ENCODE measurements at regions of chr6 and their contacts with region 1.

Region 1: GRCh38 chr6:42547407-42548329 is 16.2 kb upstream of the UBR2 start:
- DNase-seq: peak; percentile 94
- ATAC-seq: peak; percentile 99
- H3K4me3 Mint-ChIP-seq: peak overlapping the region; percentile 56
- H3K27ac Mint-ChIP-seq: peak overlapping the region; percentile 63
- H3K4me1 Mint-ChIP-seq: peaks cover 15% of the 10 kb centered on the region
- H3K27me3 Mint-ChIP-seq: peaks cover 10% of the 10 kb centered on the region

Region 2: GRCh38 chr6:41984623-41985022 is 563.0 kb before region 1 on chr6:
- CTCF ChIA-PET with region 1: no interaction called
- POLR2A ChIA-PET with region 1: no interaction called
- intact Hi-C with region 1: no loop called
- DNase-seq: no peak
- ATAC-seq: peak; percentile 43
- H3K4me3 Mint-ChIP-seq: no peak overlapping the region
- H3K27ac Mint-ChIP-seq: peak overlapping the region; percentile 44
- H3K4me1 Mint-ChIP-seq: peaks cover 69% of the 10 kb centered on the region
- H3K27me3 Mint-ChIP-seq: no peaks in the 10 kb centered on the region

Region 3: GRCh38 chr6:42224222-42224989 is 323.3 kb before region 1 on chr6:
- CTCF ChIA-PET with region 1: interaction called, 17 read pairs
- POLR2A ChIA-PET with region 1: no interaction called
- intact Hi-C with region 1: loop called (anchors 2 kb)
- DNase-seq: no peak
- ATAC-seq: peak; percentile 98
- H3K4me3 Mint-ChIP-seq: peak overlapping the region; percentile 47
- H3K27ac Mint-ChIP-seq: peak overlapping the region; percentile 73
- H3K4me1 Mint-ChIP-seq: peaks cover 26% of the 10 kb centered on the region
- H3K27me3 Mint-ChIP-seq: no peaks in the 10 kb centered on the region

Region 4: GRCh38 chr6:42302411-42302810 is 245.3 kb before region 1 on chr6:
- CTCF ChIA-PET with region 1: interaction called, 14 read pairs
- POLR2A ChIA-PET with region 1: no interaction called
- intact Hi-C with region 1: loop called in 1 of 2 experiments (anchors 5 kb)
- DNase-seq: no peak
- ATAC-seq: no peak
- H3K4me3 Mint-ChIP-seq: no peak overlapping the region
- H3K27ac Mint-ChIP-seq: no peak overlapping the region
- H3K4me1 Mint-ChIP-seq: peaks cover 4% of the 10 kb centered on the region
- H3K27me3 Mint-ChIP-seq: no peaks in the 10 kb centered on the region

Region 5: GRCh38 chr6:42423244-42423643 is 124.4 kb before region 1 on chr6:
- CTCF ChIA-PET with region 1: interaction called, 12 read pairs
- POLR2A ChIA-PET with region 1: no interaction called
- intact Hi-C with region 1: no loop called
- DNase-seq: peak; percentile 69
- ATAC-seq: peak; percentile 75
- H3K4me3 Mint-ChIP-seq: peak overlapping the region; percentile 1
- H3K27ac Mint-ChIP-seq: peak overlapping the region; percentile 20
- H3K4me1 Mint-ChIP-seq: peaks cover 63% of the 10 kb centered on the region
- H3K27me3 Mint-ChIP-seq: no peaks in the 10 kb centered on the region

Region 6: DNA sequence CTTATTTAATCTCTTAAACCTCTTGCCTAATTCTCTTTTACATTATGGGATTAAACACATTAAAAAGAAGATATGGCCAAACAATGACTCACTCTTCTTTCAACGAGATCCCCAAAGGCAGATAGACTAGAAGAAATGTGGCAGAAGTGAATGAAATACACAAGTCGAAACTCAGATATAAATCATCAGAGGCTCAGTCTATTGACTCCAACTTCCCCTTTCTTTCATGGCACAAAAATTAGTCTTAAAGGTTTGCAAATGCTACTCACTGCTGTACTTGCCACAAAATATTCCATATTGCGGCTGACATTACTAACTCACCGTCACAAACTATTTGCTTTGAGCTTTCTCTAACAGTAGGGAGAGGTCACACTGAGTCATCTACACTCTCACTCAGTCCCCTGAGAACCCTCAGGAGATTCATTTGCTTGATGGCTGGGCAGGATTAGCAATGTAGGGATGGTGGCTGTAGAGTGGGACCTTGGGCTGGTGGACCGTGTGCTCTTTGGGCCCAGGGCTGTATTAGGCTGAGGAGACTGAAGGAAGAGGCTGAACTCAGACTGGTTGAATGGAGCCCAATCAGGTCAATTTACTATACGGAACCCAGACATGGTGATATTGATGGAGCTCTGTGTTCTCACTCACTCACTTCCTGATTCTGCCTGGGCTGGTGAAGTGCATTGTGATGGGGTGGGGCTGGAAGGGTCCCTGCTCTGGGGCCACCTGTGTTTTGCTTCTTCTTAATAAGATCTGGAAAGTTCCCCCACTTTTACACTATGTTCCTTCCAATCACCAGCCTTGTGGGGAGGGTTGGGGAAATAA is 26.7 kb before region 1 on chr6:
- CTCF ChIA-PET with region 1: interaction called, 25 read pairs
- POLR2A ChIA-PET with region 1: no interaction called
- intact Hi-C with region 1: no loop called
- DNase-seq: peak; percentile 49
- ATAC-seq: peak; percentile 97
- H3K4me3 Mint-ChIP-seq: no peak overlapping the region
- H3K27ac Mint-ChIP-seq: peak overlapping the region; percentile 76
- H3K4me1 Mint-ChIP-seq: peaks cover 24% of the 10 kb centered on the region
- H3K27me3 Mint-ChIP-seq: no peaks in the 10 kb centered on the region

Region 7: DNA sequence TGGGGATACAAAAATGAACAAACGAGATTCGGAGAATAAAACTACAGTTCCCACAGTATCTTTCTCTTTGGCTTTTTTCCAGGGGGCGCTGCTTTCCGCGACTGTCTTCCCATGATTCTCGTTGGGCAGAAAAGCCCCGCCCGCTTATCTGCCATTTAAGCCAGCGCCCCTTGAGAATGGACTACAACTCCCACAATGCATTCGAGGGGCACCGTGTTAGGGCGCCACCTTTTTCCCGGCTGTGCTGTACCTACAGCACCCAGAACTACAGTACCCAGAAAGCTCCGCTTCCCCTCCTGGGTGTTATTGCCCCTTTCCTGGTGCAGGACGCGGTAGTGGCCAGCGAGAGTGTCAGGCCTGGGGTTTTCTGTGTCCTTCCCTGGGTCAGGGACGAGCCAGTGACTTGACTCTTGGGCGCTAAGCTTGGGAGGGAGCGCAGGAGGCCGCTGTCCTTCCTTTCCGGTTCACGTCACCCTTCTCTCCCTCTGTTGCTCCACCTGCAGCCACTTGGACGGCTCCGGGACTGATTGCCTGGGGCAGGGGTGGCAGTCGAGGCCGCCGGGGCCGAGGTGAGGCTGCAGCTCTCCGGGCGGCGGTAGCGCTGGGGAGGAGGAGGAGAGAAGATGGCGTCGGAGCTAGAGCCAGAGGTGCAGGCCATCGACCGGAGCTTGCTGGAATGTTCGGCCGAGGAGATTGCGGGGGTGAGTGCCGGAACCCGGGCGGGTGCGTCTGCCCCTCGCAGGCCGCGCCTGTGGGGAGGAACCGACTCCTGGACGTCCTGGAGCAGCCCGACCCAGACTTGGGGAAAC is 16.2 kb after region 1 on chr6 and contains the start of gene UBR2:
- CTCF ChIA-PET with region 1: interaction called, 31 read pairs
- POLR2A ChIA-PET with region 1: no interaction called
- intact Hi-C with region 1: no loop called
- DNase-seq: peak; percentile 97
- ATAC-seq: peak; percentile 97
- H3K4me3 Mint-ChIP-seq: peak within 1 kb of the TSS; percentile 97
- H3K27ac Mint-ChIP-seq: peak within 1 kb of the TSS; percentile 95
- H3K4me1 Mint-ChIP-seq: peaks cover 31% of the 10 kb centered on the region
- H3K27me3 Mint-ChIP-seq: no peaks in the 10 kb centered on the region
- total RNA-seq, gene UBR2: 23.9 to 28.1 TPM

Region 8: DNA sequence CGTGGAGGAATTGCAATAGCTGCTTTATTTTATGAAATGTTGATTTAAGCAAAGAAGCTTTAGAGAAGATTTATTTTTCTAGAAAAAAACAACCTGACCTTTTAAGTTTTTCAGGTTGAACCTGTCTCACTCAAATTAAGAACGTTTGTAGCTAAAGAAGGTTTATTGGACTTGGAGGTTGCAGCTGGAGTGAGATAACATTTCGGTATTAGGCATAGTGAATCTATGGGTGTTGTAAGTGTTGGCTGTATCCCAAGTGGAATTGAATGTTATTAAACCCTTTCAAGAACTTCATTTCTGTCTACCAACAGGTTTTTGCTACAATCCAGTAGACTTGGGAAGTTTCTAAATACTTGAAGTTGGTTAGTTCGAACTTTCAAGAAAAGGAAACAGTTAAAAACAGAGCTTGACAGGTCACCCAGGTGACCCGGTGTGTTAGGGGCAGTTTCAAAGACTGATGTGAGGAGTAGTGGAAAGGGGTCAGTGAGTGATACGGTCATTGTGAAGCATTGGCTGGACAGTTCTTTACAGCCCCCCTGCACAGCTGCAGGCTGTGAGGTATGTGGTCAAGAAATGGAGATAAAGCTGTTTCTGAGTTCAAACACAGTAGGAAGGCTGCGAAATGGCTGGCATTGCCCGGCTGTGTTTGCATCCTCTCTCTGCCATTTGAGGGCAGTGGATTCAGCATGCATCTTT is 200.7 kb after region 1 on chr6:
- CTCF ChIA-PET with region 1: no interaction called
- POLR2A ChIA-PET with region 1: no interaction called
- intact Hi-C with region 1: no loop called
- DNase-seq: no peak
- ATAC-seq: no peak
- H3K4me3 Mint-ChIP-seq: peak overlapping the region; percentile 84
- H3K27ac Mint-ChIP-seq: peak overlapping the region; percentile 98
- H3K4me1 Mint-ChIP-seq: peaks cover 27% of the 10 kb centered on the region
- H3K27me3 Mint-ChIP-seq: no peaks in the 10 kb centered on the region

Region 9: GRCh38 chr6:42947950-42948349 is 400.3 kb after region 1 on chr6:
- CTCF ChIA-PET with region 1: no interaction called
- POLR2A ChIA-PET with region 1: no interaction called
- intact Hi-C with region 1: no loop called
- DNase-seq: no peak
- ATAC-seq: no peak
- H3K4me3 Mint-ChIP-seq: no peak overlapping the region
- H3K27ac Mint-ChIP-seq: peak overlapping the region; percentile 19
- H3K4me1 Mint-ChIP-seq: no peaks in the 10 kb centered on the region
- H3K27me3 Mint-ChIP-seq: no peaks in the 10 kb centered on the region